Calu3 (cell line): ENCODE measurements at regions of chr9 and their contacts with region 1.

Region 1: DNA sequence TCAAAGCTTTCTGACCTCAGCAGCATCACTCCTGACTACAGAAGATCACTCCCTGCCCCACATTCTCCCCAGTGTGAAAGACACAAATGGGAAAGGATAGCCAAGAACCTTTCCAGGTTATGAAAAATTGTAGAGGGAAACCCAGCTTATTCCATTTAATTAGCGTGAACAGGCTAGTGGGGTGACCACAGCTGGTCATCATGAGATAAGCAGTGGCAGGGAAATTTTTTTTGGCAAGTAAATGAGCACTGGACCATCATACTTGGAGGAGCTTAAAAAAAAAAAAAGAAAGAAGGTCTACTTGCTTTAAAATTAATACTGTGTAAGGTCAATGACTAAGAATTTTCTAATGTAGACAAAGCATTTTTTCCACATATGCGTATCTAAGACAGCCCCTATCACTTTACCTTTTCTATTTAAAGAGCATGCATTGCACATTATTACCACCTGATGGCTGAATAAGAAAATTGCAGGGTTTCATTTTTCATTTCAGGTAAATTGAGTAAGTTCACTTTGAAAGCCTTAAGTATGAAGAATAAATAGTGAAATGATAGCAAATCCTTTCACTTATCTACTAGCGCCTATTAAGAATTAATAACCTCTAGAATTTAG is 123.6 kb downstream of the ELAVL2 start:
- DNase-seq: no peak
- H3K4me3 Mint-ChIP-seq: no peak overlapping the region
- H3K27ac Mint-ChIP-seq: no peak overlapping the region
- H3K4me1 Mint-ChIP-seq: no peaks in the 10 kb centered on the region
- H3K27me3 Mint-ChIP-seq: peaks cover 8% of the 10 kb centered on the region
- CTCF ChIP-seq: no peak

Region 2: DNA sequence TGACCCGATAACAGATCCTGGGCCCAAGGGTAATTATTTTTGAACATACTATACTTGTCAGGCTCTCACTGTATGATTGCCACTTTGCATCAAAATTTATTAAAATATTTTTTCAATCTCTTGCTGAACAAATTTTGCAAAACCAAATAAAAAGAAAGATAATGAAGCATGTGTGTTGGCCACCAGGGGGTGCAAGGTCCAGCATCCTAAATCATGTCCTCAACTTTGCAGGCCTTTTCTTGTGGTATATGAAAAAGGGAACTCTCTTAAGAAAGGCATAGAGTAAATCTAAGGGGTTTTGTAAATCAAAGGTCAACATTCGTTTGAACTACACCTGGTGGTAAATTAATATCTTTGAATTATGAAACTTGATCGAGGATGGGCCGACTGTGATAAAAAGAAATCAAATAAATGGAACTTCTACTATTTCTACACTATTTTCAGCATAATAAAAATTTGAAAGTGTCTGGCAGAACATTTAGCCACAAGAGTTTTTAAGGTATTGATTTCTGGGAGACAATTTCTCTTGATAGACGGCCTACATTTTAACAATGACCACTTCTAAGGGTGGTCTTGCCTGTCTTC is 579.3 kb before region 1 on chr9:
- CTCF ChIA-PET with region 1: no interaction called
- intact Hi-C with region 1: loop called (anchors 2 kb)
- DNase-seq: peak; percentile 31
- H3K4me3 Mint-ChIP-seq: no peak overlapping the region
- H3K27ac Mint-ChIP-seq: no peak overlapping the region
- H3K4me1 Mint-ChIP-seq: no peaks in the 10 kb centered on the region
- H3K27me3 Mint-ChIP-seq: no peaks in the 10 kb centered on the region
- CTCF ChIP-seq: peak; percentile 26